BJ (cell line): ENCODE measurements at regions of chr5 and their contacts with region 1.

Region 1: GRCh38 chr5:172429201-172429940 is 25.0 kb downstream of the SH3PXD2B start:
- DNase-seq: peak; percentile 89
- H3K4me3 ChIP-seq: no peak overlapping the region
- H3K27me3 ChIP-seq: no peaks in the 10 kb centered on the region
- CTCF ChIP-seq: no peak

Region 2: GRCh38 chr5:171845857-171846256 is 583.5 kb before region 1 on chr5:
- CTCF ChIA-PET with region 1: no interaction called
- POLR2A ChIA-PET with region 1: no interaction called
- DNase-seq: no peak
- H3K4me3 ChIP-seq: no peak overlapping the region
- H3K27me3 ChIP-seq: no peaks in the 10 kb centered on the region
- CTCF ChIP-seq: 0 out of 2 replicates have a peak, but pooled peaks have one; percentile 1

Region 3: GRCh38 chr5:172450861-172451695 is 21.7 kb after region 1 on chr5:
- CTCF ChIA-PET with region 1: interaction called, 22 read pairs
- POLR2A ChIA-PET with region 1: no interaction called
- DNase-seq: no peak
- H3K4me3 ChIP-seq: no peak overlapping the region
- H3K27me3 ChIP-seq: no peaks in the 10 kb centered on the region
- CTCF ChIP-seq: peak; percentile 74

Region 4: GRCh38 chr5:173699966-173700365 is 1270.6 kb after region 1 on chr5:
- CTCF ChIA-PET with region 1: no interaction called
- POLR2A ChIA-PET with region 1: interaction called, 16 read pairs
- DNase-seq: no peak
- H3K4me3 ChIP-seq: no peak overlapping the region
- H3K27me3 ChIP-seq: no peaks in the 10 kb centered on the region
- CTCF ChIP-seq: no peak